ENCODE measurements at regions of chr9 and their contacts with region 1.

Region 1: DNA sequence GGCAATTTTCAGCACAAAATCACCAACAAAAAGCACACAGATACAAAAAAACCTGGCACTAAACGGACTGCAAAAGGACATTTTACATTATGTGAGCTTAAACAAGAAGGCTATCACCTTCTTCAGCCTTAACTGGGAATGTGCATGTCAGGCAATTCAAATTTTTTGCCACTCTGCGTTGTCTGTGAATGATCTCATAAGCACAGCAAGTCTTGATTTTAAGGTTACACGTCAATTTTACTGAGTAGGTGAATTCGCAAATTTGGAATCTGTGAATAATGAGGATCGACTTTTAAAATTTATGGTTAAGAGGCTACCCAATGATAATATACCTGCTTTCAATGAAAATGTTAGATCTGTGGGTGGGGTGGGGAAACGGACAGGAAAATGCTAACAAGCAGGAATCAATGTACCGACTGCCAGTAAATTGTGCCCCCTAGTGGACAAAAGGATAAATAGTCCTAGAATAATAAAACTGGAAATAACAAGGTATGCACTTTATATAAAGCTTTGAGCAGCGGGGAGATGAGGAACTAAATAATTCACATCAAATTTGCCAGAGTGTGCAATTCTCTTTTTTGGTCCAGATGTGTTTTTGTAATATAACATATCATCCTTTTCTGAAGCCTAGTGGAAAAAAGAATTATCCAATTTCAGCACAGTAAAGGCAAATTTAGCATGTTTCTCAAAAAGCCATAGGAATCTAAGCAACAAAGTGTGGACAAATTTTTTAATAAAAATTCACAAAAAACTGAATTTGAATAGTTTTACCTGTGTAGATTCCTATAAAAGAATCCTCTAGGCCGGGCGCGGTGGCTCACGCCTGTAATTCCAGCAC is 20.5 kb downstream of the EQTN start:
- DNase-seq: peak; percentile 67
- ATAC-seq: peak; percentile 70
- H3K4me3 ChIP-seq: no peak overlapping the region
- H3K27ac ChIP-seq: peak overlapping the region; percentile 14; the same call in 1 of the 2 replicates
- H3K4me1 ChIP-seq: peaks cover 4% of the 10 kb centered on the region
- H3K27me3 ChIP-seq: peaks cover 2% of the 10 kb centered on the region
- CTCF ChIP-seq: peak; percentile 84
- POLR2A ChIP-seq: no peak
- RAD21 ChIP-seq: peak; percentile 95

Region 2: DNA sequence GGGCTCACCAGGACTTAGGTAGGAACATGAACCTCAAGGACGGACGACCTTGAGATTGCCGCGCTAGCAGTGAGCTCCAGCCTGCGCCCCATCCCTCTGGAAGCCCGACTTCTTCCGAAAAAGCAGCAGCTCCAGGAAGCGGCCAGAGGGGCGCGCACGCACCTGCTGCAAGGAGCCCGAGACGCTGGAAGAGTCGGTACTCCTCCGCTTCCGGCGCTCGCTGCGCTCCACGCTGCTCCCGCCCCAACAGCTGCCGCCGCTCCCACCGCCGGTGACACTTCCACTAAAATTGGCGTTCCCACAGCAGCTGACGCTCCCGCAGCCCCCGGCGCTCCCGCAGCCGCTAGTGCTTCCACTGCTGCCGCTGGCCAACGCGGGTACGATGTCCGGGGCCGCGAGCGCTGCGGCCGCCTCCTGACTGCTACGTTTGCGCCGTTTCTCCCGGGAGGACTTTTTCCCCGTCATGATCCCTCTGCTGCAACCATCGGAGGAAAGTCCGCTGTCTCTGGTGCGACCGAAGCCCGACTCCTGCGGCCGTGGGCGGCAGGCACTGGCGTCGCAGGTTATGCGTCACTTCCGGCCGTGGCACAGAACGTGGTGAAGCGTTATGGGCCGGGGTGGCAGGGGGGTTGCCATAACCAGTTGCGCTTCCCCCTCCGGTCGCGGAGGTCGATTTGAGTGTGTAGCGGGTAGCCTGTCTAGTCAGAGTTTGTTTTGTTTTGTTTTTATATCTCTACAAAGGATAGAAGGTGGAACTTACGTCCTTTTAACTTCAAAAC is 384.0 kb before region 1 on chr9 and contains the start of gene CAAP1:
- CTCF ChIA-PET with region 1: no interaction called
- POLR2A ChIA-PET with region 1: no interaction called
- dilution Hi-C with region 1: no loop called
- in situ Hi-C with region 1: no loop called
- intact Hi-C with region 1: loop called (anchors 1 kb)
- DNase-seq: peak; percentile 92
- ATAC-seq: peak; percentile 96
- H3K4me3 ChIP-seq: peak within 1 kb of the TSS; percentile 84
- H3K27ac ChIP-seq: peak within 1 kb of the TSS; percentile 81
- H3K4me1 ChIP-seq: no peaks in the 10 kb centered on the region
- H3K27me3 ChIP-seq: no peaks in the 10 kb centered on the region
- CTCF ChIP-seq: peak; percentile 49
- POLR2A ChIP-seq: peak; percentile 92
- RAD21 ChIP-seq: peak; percentile 49
- total RNA-seq, gene CAAP1: 6.1 and 12.2 TPM in 2 replicates

Region 3: DNA sequence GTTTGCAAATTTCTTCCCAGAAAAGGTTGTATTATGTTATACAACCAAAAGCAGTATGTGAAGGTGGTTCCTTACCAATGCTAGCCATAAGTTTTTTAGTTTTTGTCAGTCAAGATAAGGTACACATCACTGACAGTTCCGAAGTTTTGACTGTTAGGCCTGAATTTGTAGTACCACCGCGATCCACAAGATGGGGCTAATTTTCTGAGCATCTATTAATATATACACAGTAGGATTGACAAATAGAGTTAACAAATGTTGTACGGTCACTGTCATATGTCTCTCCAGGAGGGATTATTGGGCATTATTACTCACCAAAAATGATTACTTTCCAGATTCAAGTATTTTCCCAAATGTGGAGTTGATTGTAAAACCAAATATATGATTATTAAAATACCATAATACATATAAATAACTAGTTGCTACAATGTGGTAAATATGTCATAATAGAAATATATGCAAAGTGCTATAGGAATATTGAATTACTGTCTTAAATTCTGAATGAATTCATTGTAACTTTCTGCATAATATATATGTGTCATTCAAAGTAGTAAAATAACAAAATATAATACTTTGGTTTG is 242.5 kb before region 1 on chr9:
- CTCF ChIA-PET with region 1: interaction called, 3 read pairs
- POLR2A ChIA-PET with region 1: no interaction called
- dilution Hi-C with region 1: no loop called
- in situ Hi-C with region 1: loop called (anchors 5 kb)
- intact Hi-C with region 1: loop called (anchors 1 kb)
- DNase-seq: peak; percentile 53
- ATAC-seq: peak; percentile 86
- H3K4me3 ChIP-seq: no peak overlapping the region
- H3K27ac ChIP-seq: no peak overlapping the region
- H3K4me1 ChIP-seq: no peaks in the 10 kb centered on the region
- H3K27me3 ChIP-seq: no peaks in the 10 kb centered on the region
- CTCF ChIP-seq: peak; percentile 84
- POLR2A ChIP-seq: no peak
- RAD21 ChIP-seq: peak; percentile 91

Region 4: GRCh38 chr9:27108981-27109541 is 167.4 kb before region 1 on chr9 and contains the start of gene TEK:
- CTCF ChIA-PET with region 1: no interaction called
- POLR2A ChIA-PET with region 1: no interaction called
- dilution Hi-C with region 1: no loop called
- in situ Hi-C with region 1: no loop called
- intact Hi-C with region 1: loop called (anchors 1 kb)
- DNase-seq: peak; percentile 44
- ATAC-seq: peak; percentile 57
- H3K4me3 ChIP-seq: peak within 1 kb of the TSS; percentile 55
- H3K27ac ChIP-seq: peak within 1 kb of the TSS; percentile 95
- H3K4me1 ChIP-seq: peaks cover 11% of the 10 kb centered on the region
- H3K27me3 ChIP-seq: no peaks in the 10 kb centered on the region
- CTCF ChIP-seq: no peak
- POLR2A ChIP-seq: no peak
- RAD21 ChIP-seq: no peak
- total RNA-seq, gene TEK: 10.8 and 11.7 TPM in 2 replicates

Region 5: GRCh38 chr9:27131731-27132130 is 144.7 kb before region 1 on chr9:
- CTCF ChIA-PET with region 1: no interaction called
- POLR2A ChIA-PET with region 1: no interaction called
- dilution Hi-C with region 1: no loop called
- in situ Hi-C with region 1: no loop called
- intact Hi-C with region 1: loop called (anchors 1 kb)
- DNase-seq: peak; percentile 81
- ATAC-seq: peak; percentile 83
- H3K4me3 ChIP-seq: no peak overlapping the region
- H3K27ac ChIP-seq: peak overlapping the region; percentile 87; the same call in 1 of the 2 replicates
- H3K4me1 ChIP-seq: peaks cover 12% of the 10 kb centered on the region
- H3K27me3 ChIP-seq: no peaks in the 10 kb centered on the region
- CTCF ChIP-seq: no peak
- POLR2A ChIP-seq: no peak
- RAD21 ChIP-seq: no peak

Measured in IMR-90 (cell line).